ENCODE measurements at regions of chr3 and their contacts with region 1.

Region 1: GRCh38 chr3:37855363-37855970 is 6.2 kb upstream of the CTDSPL start:
- DNase-seq: peak; percentile 52
- ATAC-seq: no peak
- H3K4me3 Mint-ChIP-seq: no peak overlapping the region
- H3K27ac Mint-ChIP-seq: no peak overlapping the region
- H3K4me1 Mint-ChIP-seq: peaks cover 3% of the 10 kb centered on the region
- H3K27me3 Mint-ChIP-seq: peaks cover 19% of the 10 kb centered on the region
- CTCF ChIP-seq: peak; percentile 19

Region 2: DNA sequence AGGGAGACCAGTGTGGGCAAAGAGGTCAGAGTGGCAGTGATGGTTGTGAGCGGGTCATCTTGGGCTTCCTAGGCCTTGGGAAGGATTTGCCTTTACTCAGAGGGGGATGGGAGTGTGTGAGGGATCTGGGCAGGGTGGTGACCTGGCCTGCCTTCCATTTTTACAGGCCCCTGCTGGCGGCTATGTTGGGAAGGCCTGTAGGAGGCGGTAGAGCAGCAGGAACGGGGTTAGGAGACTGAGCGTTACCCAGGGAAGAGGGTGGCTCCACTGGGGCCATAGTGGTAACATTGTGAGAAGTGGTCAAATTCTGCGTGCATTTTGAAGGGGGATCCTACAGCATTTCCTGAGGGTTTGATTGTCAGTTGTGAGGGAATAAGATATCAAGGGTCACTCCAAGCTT is 301.1 kb before region 1 on chr3:
- CTCF ChIA-PET with region 1: no interaction called
- POLR2A ChIA-PET with region 1: no interaction called
- intact Hi-C with region 1: no loop called
- DNase-seq: no peak
- ATAC-seq: no peak
- H3K4me3 Mint-ChIP-seq: no peak overlapping the region
- H3K27ac Mint-ChIP-seq: no peak overlapping the region
- H3K4me1 Mint-ChIP-seq: no peaks in the 10 kb centered on the region
- H3K27me3 Mint-ChIP-seq: no peaks in the 10 kb centered on the region
- CTCF ChIP-seq: no peak

Region 3: GRCh38 chr3:37967260-37967881 is 111.9 kb after region 1 on chr3:
- CTCF ChIA-PET with region 1: interaction called, 25 read pairs
- POLR2A ChIA-PET with region 1: no interaction called
- intact Hi-C with region 1: loop called (anchors 1 kb)
- DNase-seq: no peak
- ATAC-seq: peak; percentile 34
- H3K4me3 Mint-ChIP-seq: no peak overlapping the region
- H3K27ac Mint-ChIP-seq: no peak overlapping the region
- H3K4me1 Mint-ChIP-seq: no peaks in the 10 kb centered on the region
- H3K27me3 Mint-ChIP-seq: peaks cover 5% of the 10 kb centered on the region
- CTCF ChIP-seq: peak; percentile 30

Measured in activated B cell treated with CpG ODN at 0.5 μM for 24 hours (primary cell).